Activated CD4-positive, alpha-beta T cell treated with anti-CD3 and anti-CD28 coated beads for 36 hours (primary cell): ENCODE measurements at regions of chr11 and their contacts with region 1.

Region 1: DNA sequence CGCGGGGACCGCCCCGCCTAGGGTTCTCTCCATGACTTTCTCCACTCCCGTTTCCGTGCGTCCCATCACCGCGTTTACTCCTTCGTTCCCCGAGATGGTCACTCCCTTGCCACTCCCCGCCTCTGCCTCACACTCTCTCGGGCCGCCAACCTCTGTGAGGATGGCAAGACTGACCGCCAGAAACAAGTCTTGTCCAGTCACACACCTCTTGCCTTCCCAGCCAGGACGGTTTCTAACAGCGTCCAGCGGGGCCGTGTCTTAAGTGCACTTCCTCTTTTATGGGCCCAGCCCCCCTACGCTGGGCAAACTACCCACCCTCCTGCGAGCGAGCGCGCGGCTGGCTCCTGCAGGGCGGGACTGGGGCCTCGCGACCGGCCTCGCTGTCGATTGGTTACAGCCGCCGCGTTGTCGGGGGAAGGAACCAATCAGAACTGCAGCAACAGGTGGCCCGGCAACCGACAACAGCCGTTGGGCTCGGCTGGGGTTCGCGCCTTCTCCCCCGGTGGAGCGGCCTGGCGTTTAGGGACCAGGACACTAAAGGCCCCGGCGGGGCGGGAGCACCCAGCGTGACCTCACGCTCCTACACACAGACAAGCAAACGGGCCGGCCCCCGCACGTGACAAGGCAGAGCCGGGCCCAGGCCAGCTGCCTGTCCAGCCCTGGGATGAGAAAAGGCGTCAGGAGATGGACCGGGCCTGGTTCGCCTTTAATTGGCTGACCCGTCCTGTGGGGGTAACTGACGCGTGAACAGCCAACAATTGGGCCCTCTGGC is 512 bp upstream of the UCP2 start:
- DNase-seq: peak; percentile 96
- ATAC-seq: peak; percentile 84
- H3K4me3 Mint-ChIP-seq: peak overlapping the region; percentile 89
- H3K27ac Mint-ChIP-seq: peak overlapping the region; percentile 96
- H3K4me1 Mint-ChIP-seq: peaks cover 60% of the 10 kb centered on the region
- H3K27me3 Mint-ChIP-seq: no peaks in the 10 kb centered on the region

Region 2: DNA sequence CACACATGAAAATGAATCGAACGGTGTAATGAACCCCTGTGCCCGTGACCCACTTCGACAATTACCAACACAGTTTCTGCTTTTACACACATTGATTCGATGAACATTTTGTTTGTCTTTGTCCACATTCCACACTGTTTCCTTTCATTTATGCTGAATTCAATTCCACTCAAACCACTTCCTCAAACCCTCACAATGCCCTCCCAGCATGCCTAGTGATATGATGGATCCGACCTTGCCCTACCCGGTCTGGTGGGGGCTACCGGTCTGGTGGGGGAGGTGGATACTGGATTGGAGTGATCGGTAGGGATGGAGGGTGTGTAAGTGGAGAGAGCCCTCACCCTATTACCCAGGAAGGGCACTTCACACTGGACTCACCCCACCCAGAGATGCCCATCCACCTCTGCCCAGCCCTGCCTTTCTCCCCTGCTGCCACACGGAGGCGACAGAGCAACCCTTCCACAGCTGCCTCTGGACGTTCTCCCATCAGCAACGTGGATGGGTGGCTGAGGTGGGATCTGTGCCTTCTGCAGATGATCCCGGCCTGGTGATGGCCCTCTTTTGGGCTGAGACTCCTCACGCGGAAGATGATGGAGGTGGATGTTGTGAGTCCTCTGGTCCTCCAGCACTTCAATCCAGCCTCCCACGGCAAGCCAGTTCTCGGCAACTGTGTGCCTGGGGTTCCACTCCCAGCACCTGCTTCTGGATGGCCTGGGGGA is 798.0 kb before region 1 on chr11:
- CTCF ChIA-PET with region 1: no interaction called
- POLR2A ChIA-PET with region 1: no interaction called
- intact Hi-C with region 1: no loop called
- DNase-seq: peak; percentile 77
- ATAC-seq: peak; percentile 95
- H3K4me3 Mint-ChIP-seq: peak overlapping the region; percentile 40
- H3K27ac Mint-ChIP-seq: no peak overlapping the region
- H3K4me1 Mint-ChIP-seq: peaks cover 6% of the 10 kb centered on the region
- H3K27me3 Mint-ChIP-seq: peaks cover 2% of the 10 kb centered on the region

Region 3: DNA sequence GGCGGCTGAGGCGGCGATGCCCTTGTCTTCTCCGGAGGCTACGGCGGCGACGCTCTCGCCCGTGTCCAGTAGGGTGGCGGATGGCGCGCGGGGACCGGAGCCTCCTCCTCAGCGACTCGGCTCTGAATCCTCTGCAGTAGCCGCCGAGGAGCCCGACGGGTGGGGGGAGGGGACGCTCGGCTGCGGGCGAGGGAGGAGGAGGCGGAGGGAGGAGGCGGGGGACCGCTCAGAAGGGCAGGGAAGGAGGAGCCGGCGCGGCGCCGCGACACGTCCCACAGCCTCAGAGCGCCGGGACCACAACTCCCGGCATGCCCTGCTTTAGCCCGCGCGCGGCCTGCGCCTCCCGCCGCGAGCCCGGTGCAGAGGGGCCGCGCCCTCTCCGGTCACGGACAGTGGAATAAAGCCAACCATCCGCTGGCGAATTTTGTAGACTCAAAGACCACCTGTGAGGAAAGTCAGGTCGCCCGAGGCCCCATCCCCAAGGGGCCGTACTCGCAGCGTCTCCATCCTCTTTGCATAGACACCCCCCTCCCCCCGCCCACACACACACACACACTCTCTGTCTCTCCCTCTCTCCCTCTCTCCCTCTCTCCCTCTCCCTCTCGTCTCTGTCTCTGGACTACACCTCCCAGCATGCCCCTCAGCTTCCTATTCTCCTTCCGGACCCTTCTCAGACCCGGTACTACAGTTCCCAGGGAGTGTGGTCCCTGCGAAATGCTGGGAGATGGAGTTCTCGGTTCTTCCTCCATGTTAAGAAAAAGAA is 385.0 kb before region 1 on chr11 and contains the start of gene FAM168A:
- CTCF ChIA-PET with region 1: no interaction called
- POLR2A ChIA-PET with region 1: no interaction called
- intact Hi-C with region 1: loop called in 1 of 2 experiments (anchors 1 kb)
- DNase-seq: peak; percentile 97
- ATAC-seq: peak; percentile 94
- H3K4me3 Mint-ChIP-seq: peak within 1 kb of the TSS; percentile 87
- H3K27ac Mint-ChIP-seq: peak within 1 kb of the TSS; percentile 92
- H3K4me1 Mint-ChIP-seq: peaks cover 34% of the 10 kb centered on the region
- H3K27me3 Mint-ChIP-seq: no peaks in the 10 kb centered on the region
- total RNA-seq, gene FAM168A: 12.7 to 17.5 TPM

Region 4: GRCh38 chr11:73787643-73788537 is 195.3 kb before region 1 on chr11 and contains the start of gene MRPL48:
- CTCF ChIA-PET with region 1: no interaction called
- POLR2A ChIA-PET with region 1: no interaction called
- intact Hi-C with region 1: loop called in 1 of 2 experiments (anchors 2 kb)
- DNase-seq: peak; percentile 95
- ATAC-seq: peak; percentile 99
- H3K4me3 Mint-ChIP-seq: peak within 1 kb of the TSS; percentile 92
- H3K27ac Mint-ChIP-seq: peak within 1 kb of the TSS; percentile 99
- H3K4me1 Mint-ChIP-seq: peaks cover 9% of the 10 kb centered on the region
- H3K27me3 Mint-ChIP-seq: no peaks in the 10 kb centered on the region
- total RNA-seq, gene MRPL48: 48.5 to 52.0 TPM

Region 5: GRCh38 chr11:73995247-73995646 is 12.1 kb after region 1 on chr11:
- CTCF ChIA-PET with region 1: interaction called, 13 read pairs
- POLR2A ChIA-PET with region 1: interaction called, 66 read pairs
- intact Hi-C with region 1: loop called (anchors 1 kb)
- DNase-seq: no peak
- ATAC-seq: peak; percentile 80
- H3K4me3 Mint-ChIP-seq: peak overlapping the region; percentile 37
- H3K27ac Mint-ChIP-seq: peak overlapping the region; percentile 92
- H3K4me1 Mint-ChIP-seq: peaks cover 72% of the 10 kb centered on the region
- H3K27me3 Mint-ChIP-seq: no peaks in the 10 kb centered on the region

Region 6: DNA sequence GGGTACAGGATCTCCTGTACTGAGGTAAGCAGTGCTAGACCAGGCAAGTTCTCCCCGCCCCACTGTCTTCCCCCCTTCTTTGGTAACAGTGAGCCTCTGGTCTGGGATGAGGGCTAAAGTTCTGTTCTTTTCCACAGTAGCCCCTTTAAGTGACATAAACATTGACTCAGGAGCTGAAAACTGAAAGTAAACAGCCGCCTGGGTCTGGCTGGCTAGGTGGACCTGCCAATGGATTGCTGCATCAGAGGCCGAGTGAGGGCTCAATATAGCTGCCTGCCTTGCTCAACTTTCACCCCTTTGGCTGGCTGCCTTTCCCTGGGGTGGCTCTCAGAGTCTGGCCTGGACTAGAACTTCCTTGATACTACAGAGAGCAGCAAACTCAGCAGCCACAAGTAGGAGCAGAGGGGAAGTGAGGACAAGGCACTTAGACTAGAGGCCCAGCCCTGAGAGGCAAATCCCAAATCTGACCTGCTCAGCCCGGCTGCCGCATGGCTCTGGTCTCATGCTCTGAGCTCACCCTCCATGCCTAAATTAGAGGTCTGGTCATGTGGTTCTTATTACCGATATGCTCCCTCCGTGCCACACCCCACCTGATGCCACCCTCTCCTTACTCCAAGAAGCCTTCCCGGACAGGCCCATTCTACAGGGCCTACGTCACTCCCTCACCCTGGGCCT is 35.3 kb after region 1 on chr11:
- CTCF ChIA-PET with region 1: interaction called, 8 read pairs
- POLR2A ChIA-PET with region 1: interaction called, 35 read pairs
- intact Hi-C with region 1: loop called (anchors 1 to 2 kb)
- DNase-seq: no peak
- ATAC-seq: no peak
- H3K4me3 Mint-ChIP-seq: no peak overlapping the region
- H3K27ac Mint-ChIP-seq: no peak overlapping the region
- H3K4me1 Mint-ChIP-seq: peaks cover 42% of the 10 kb centered on the region
- H3K27me3 Mint-ChIP-seq: no peaks in the 10 kb centered on the region

Region 7: GRCh38 chr11:74288161-74288560 is 305.0 kb after region 1 on chr11:
- CTCF ChIA-PET with region 1: no interaction called
- POLR2A ChIA-PET with region 1: no interaction called
- intact Hi-C with region 1: no loop called
- DNase-seq: peak; percentile 28
- ATAC-seq: peak; percentile 85
- H3K4me3 Mint-ChIP-seq: no peak overlapping the region
- H3K27ac Mint-ChIP-seq: no peak overlapping the region
- H3K4me1 Mint-ChIP-seq: peaks cover 6% of the 10 kb centered on the region
- H3K27me3 Mint-ChIP-seq: peaks cover 3% of the 10 kb centered on the region

Region 8: DNA sequence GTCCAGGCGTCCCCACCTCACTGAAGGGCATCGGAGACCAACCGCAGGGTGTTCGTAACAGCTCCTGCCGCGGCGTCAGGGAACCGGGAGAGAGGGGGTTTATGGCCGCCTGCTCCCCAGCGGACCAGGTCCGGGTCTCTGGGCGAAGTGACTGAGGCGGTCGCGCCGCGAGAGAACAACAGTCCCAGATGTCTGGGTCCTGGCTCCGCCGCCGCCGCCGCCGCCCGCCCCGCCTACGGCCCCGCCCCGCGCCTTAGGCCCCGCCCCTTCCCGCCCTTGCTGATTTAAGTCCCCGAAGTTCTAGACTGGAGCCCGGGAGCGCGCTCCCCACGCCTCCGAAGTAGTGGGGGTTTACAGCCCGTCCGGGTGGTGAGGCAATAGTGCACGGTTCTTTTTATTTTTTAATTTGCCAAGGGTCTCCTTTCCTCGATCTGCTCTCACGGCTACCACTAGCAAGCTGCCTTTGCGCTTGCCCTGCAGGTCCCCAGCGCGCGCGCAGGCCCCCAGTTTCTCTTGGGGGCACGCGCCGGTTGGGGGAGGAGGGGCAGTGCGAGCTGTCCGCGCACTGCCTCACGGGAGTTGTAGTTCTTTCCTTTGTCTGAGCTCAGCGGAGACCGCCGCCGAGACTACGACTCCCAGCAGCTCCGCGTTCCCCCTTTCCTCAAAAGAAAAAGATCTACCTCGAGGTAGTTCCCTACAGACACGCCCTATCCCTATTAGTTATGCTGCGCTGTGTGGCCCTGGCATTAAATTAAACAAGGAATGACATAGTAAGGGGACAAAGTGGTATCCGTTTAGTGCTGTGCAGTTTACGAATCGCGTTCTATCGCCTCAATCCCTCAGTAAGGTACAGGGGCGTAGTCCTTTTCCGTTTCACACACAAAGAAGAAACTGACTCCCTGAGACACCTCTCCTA is 415.3 kb after region 1 on chr11 and contains the start of gene PGM2L1:
- CTCF ChIA-PET with region 1: no interaction called
- POLR2A ChIA-PET with region 1: interaction called, 4 read pairs
- intact Hi-C with region 1: loop called in 1 of 2 experiments (anchors 5 kb)
- DNase-seq: peak; percentile 96
- ATAC-seq: peak; percentile 88
- H3K4me3 Mint-ChIP-seq: peak within 1 kb of the TSS; percentile 92
- H3K27ac Mint-ChIP-seq: peak within 1 kb of the TSS; percentile 100
- H3K4me1 Mint-ChIP-seq: peaks cover 39% of the 10 kb centered on the region
- H3K27me3 Mint-ChIP-seq: no peaks in the 10 kb centered on the region
- total RNA-seq, gene PGM2L1: 8.8 to 11.0 TPM